ENCODE measurements at regions of chr1 and their contacts with region 1.

Region 1: GRCh38 chr1:231806623-231807495 is 180.3 kb downstream of the DISC1 start:
- DNase-seq: peak; percentile 74
- H3K4me3 Mint-ChIP-seq: no peak overlapping the region
- H3K27ac Mint-ChIP-seq: no peak overlapping the region
- H3K4me1 Mint-ChIP-seq: no peaks in the 10 kb centered on the region
- H3K27me3 Mint-ChIP-seq: no peaks in the 10 kb centered on the region

Region 2: DNA sequence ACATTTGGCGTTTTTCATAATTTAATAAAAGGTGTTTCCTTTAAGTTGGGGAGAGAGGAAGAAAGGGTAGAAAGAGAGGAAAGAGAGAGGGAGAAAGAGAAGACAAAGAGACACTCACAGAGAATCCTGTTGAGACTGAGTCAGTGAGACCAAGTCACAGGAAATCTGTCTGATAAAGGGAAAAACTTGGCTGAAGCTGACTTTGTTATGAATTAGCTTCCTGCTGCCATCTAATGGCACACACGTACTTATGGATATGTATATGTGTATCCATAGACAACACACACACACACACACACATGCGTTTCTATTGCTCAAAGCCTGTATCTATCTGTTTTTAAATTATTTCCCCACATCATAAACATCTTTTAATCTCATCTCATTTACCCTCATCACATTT is 222.7 kb before region 1 on chr1:
- intact Hi-C with region 1: no loop called
- DNase-seq: no peak
- H3K4me3 Mint-ChIP-seq: no peak overlapping the region
- H3K27ac Mint-ChIP-seq: no peak overlapping the region
- H3K4me1 Mint-ChIP-seq: no peaks in the 10 kb centered on the region
- H3K27me3 Mint-ChIP-seq: peaks cover 2% of the 10 kb centered on the region

Region 3: DNA sequence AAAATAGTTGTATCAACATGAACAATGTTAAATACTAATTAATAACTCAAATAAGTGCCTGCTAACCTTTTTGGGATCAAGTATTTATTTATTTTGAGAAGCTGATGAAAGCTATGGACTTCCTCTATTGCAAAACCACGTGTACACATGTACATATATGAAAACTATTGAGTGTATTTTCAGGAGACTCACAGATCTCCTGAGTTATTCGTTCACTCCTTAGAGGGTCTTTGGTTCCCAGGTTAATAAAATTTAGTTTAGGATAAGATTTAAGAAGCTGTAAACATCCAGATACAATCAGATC is 49.8 kb before region 1 on chr1:
- intact Hi-C with region 1: loop called (anchors 5 kb)
- DNase-seq: no peak
- H3K4me3 Mint-ChIP-seq: no peak overlapping the region
- H3K27ac Mint-ChIP-seq: no peak overlapping the region
- H3K4me1 Mint-ChIP-seq: no peaks in the 10 kb centered on the region
- H3K27me3 Mint-ChIP-seq: no peaks in the 10 kb centered on the region

Measured in activated CD4-positive, alpha-beta T cell treated with anti-CD3 and anti-CD28 coated beads, Interleukin-2, amount 10 ng/mL, durations not matched to agents 24 days and 14 days (primary cell).